GM12878 (cell line): ENCODE measurements at regions of chr2 and their contacts with region 1.

Region 1: GRCh38 chr2:179646173-179646769 is 215.1 kb downstream of the ZNF385B start:
- DNase-seq: no peak
- ATAC-seq: no peak
- H3K4me3 ChIP-seq: no peak overlapping the region
- H3K27ac ChIP-seq: no peak overlapping the region
- H3K4me1 ChIP-seq: no peaks in the 10 kb centered on the region
- H3K27me3 ChIP-seq: no peaks in the 10 kb centered on the region
- CTCF ChIP-seq: no peak
- EP300 ChIP-seq: no peak
- POLR2A ChIP-seq: no peak
- RAD21 ChIP-seq: no peak

Region 2: GRCh38 chr2:179606141-179606540 is 40.1 kb before region 1 on chr2:
- CTCF ChIA-PET with region 1: no interaction called
- POLR2A ChIA-PET with region 1: no interaction called
- RAD21 ChIA-PET with region 1: no interaction called
- SMC1A ChIA-PET with region 1: no interaction called
- in situ Hi-C with region 1: no loop called
- intact Hi-C with region 1: loop called (anchors 5 kb)
- DNase-seq: no peak
- ATAC-seq: no peak
- H3K4me3 ChIP-seq: no peak overlapping the region
- H3K27ac ChIP-seq: no peak overlapping the region
- H3K4me1 ChIP-seq: no peaks in the 10 kb centered on the region
- H3K27me3 ChIP-seq: no peaks in the 10 kb centered on the region
- CTCF ChIP-seq: no peak
- EP300 ChIP-seq: no peak
- POLR2A ChIP-seq: no peak
- RAD21 ChIP-seq: no peak